ENCODE measurements at regions of chr20 and their contacts with region 1.

Region 1: GRCh38 chr20:25065625-25066338 is 7.8 kb upstream of the ACSS1 start:
- DNase-seq: peak; percentile 29
- H3K4me3 Mint-ChIP-seq: no peak overlapping the region
- H3K27ac Mint-ChIP-seq: no peak overlapping the region
- H3K4me1 Mint-ChIP-seq: peaks cover 10% of the 10 kb centered on the region
- H3K27me3 Mint-ChIP-seq: peaks cover 24% of the 10 kb centered on the region
- CTCF ChIP-seq: no peak

Region 2: DNA sequence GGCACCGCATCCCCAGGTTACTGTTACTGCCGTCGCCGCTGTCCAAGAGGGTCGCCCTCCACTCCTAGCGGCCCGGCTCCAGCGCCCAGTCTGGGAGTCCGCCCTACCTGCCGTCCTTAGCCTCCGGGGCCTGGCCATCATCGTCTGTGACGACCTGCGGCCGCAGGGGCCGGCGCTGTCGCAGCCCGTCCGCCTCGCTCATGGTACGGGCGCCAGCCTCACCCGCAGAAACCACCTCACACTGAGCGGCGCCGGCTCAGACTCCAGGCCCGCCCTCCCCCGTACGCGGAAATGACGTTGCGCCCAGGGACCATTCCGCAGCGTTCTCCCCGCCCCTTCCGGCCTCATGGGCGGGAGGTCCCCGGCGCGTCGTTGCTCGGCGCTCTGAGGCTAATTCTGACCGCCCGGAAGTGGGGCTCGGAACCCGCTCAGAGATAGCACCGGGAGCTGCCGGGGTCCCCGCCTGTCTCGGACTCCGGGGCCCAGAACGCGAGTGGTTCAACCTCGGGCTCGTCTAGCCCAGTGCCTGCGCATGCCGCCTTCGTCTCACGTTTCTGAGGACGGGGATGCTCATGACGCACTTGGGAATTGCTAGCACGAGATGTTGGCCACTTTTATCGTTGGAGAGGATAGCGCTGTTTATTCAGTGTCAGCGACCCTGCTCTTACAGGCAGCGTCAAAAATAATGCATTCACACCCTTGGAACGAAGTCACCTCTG is 73.1 kb before region 1 on chr20 and contains the start of gene APMAP:
- CTCF ChIA-PET with region 1: interaction called, 6 read pairs
- intact Hi-C with region 1: loop called (anchors 1 kb)
- DNase-seq: peak; percentile 82
- H3K4me3 Mint-ChIP-seq: peak within 1 kb of the TSS; percentile 81
- H3K27ac Mint-ChIP-seq: peak within 1 kb of the TSS; percentile 68
- H3K4me1 Mint-ChIP-seq: peaks cover 16% of the 10 kb centered on the region
- H3K27me3 Mint-ChIP-seq: no peaks in the 10 kb centered on the region
- CTCF ChIP-seq: no peak
- total RNA-seq, gene APMAP: 29.9 and 30.7 TPM in 2 replicates

Measured in Calu3 (cell line).